ENCODE measurements at regions of chr19 and their contacts with region 1.

Region 1: GRCh38 chr19:7928736-7929701 is 3.1 kb upstream of the CTXN1 start:
- DNase-seq: no peak
- ATAC-seq: peak; percentile 13; the same call in 1 of the 2 replicates
- H3K4me3 ChIP-seq: no peak overlapping the region
- H3K27ac ChIP-seq: peak overlapping the region; percentile 82
- H3K4me1 ChIP-seq: peaks cover 45% of the 10 kb centered on the region
- H3K27me3 ChIP-seq: no peaks in the 10 kb centered on the region
- CTCF ChIP-seq: peak; percentile 62

Region 2: DNA sequence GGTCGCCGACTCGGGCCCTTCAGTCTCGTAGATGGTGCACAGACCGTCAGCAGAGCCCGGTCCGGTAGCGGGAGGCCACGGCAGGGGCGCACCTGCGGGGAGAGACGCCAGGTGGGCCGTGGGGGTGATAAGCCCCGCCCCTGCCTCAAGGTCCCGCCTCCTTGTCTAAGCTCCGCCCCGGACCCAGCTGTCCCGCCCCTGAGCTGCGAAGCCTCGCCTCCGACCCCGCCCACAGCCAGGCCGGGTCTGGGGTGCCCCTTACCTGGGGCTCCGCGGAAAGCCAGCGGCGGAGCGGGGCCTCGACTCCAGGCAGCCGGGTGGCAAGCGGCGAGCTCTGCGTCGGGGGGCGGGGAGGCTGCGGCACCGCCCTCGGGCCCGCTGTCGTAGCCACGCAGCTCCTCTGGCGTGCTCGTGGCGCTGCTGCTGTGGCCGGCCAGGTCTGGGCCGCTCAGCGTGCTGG is 59.5 kb before region 1 on chr19:
- CTCF ChIA-PET with region 1: no interaction called
- POLR2A ChIA-PET with region 1: interaction called, 11 read pairs
- in situ Hi-C with region 1: no loop called
- intact Hi-C with region 1: no loop called
- DNase-seq: no peak
- ATAC-seq: peak; percentile 69
- H3K4me3 ChIP-seq: peak overlapping the region; percentile 42 to 62
- H3K27ac ChIP-seq: no peak overlapping the region
- H3K4me1 ChIP-seq: no peaks in the 10 kb centered on the region
- H3K27me3 ChIP-seq: no peaks in the 10 kb centered on the region
- CTCF ChIP-seq: peak; percentile 73

Region 3: GRCh38 chr19:7943444-7944176 is 14.6 kb after region 1 on chr19 and contains the start of gene TIMM44:
- CTCF ChIA-PET with region 1: interaction called, 3 read pairs
- POLR2A ChIA-PET with region 1: interaction called, 10 read pairs
- in situ Hi-C with region 1: no loop called
- intact Hi-C with region 1: no loop called
- DNase-seq: peak; percentile 95
- ATAC-seq: peak; percentile 99
- H3K4me3 ChIP-seq: peak within 1 kb of the TSS; percentile 92 to 96
- H3K27ac ChIP-seq: peak within 1 kb of the TSS; percentile 86
- H3K4me1 ChIP-seq: no peaks in the 10 kb centered on the region
- H3K27me3 ChIP-seq: no peaks in the 10 kb centered on the region
- CTCF ChIP-seq: no peak
- total RNA-seq, gene TIMM44: 105 TPM

Region 4: GRCh38 chr19:8180061-8180460 is 251.0 kb after region 1 on chr19:
- CTCF ChIA-PET with region 1: interaction called, 13 read pairs
- POLR2A ChIA-PET with region 1: no interaction called
- in situ Hi-C with region 1: no loop called
- intact Hi-C with region 1: no loop called
- DNase-seq: no peak
- ATAC-seq: no peak
- H3K4me3 ChIP-seq: no peak overlapping the region
- H3K27ac ChIP-seq: no peak overlapping the region
- H3K4me1 ChIP-seq: no peaks in the 10 kb centered on the region
- H3K27me3 ChIP-seq: no peaks in the 10 kb centered on the region
- CTCF ChIP-seq: no peak

Region 5: GRCh38 chr19:8866344-8866743 is 937.3 kb after region 1 on chr19:
- CTCF ChIA-PET with region 1: no interaction called
- POLR2A ChIA-PET with region 1: no interaction called
- in situ Hi-C with region 1: no loop called
- intact Hi-C with region 1: no loop called
- DNase-seq: no peak
- ATAC-seq: no peak
- H3K4me3 ChIP-seq: no peak overlapping the region
- H3K27ac ChIP-seq: no peak overlapping the region
- H3K4me1 ChIP-seq: no peaks in the 10 kb centered on the region
- H3K27me3 ChIP-seq: no peaks in the 10 kb centered on the region
- CTCF ChIP-seq: no peak

Measured in Panc1 (cell line).